CD8-positive, alpha-beta memory T cell (primary cell): ENCODE measurements at regions of chr2 and their contacts with region 1.

Region 1: GRCh38 chr2:68751397-68752339 is 17.1 kb downstream of the ARHGAP25 start:
- DNase-seq: peak; percentile 82 to 93 (median 89)
- H3K4me3 ChIP-seq: peak overlapping the region; percentile 11
- H3K4me3 Mint-ChIP-seq: peak overlapping the region; percentile 5 to 67 (median 50)
- H3K27ac ChIP-seq: no peak overlapping the region
- H3K27ac Mint-ChIP-seq: peak overlapping the region; percentile 66 to 97 (median 92)
- H3K4me1 ChIP-seq: peaks cover 91% of the 10 kb centered on the region
- H3K4me1 Mint-ChIP-seq: peaks cover 85 to 95% (median 94%) of the 10 kb centered on the region in 3 donors
- H3K27me3 ChIP-seq: no peaks in the 10 kb centered on the region
- H3K27me3 Mint-ChIP-seq: no peaks in the 10 kb centered on the region

Region 2: DNA sequence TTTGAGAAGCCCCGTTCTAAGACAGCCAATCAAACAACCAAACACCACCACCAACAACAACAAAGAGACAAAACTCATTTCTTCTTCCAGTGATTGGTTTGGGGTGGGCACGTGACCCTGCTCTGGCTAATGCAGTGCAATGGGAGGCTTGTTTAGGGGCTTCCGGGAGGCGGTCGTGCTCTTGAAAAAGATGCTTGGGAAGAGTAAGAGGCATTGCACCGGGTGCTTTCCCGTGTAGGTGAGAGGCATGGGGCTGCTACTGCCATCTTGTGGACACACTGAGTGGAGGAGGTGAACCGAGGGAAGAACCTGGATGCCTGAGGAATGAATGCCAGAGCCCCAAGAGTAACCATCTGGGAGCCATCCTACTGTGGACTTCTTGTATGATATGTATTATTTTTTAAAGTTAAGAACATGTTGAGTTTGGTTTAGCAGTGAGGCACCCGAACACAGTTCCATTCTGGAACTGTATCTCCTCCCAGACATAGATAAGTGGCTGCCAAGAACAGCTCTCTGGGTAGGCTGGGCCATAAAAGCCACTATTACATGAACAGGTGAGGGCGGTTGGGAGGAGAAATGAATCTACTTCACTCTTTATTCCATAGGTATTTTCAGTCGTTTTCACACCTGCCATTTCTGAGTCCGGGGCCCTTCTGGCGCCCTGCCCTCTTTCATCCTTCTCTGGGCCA is 36.2 kb before region 1 on chr2:
- CTCF ChIA-PET with region 1: interaction called, 26 read pairs
- POLR2A ChIA-PET with region 1: interaction called, 3 read pairs
- DNase-seq: peak in 4 of 5 donors; percentile 38 to 67 (median 49)
- H3K4me3 ChIP-seq: peak overlapping the region; percentile 38
- H3K4me3 Mint-ChIP-seq: peak overlapping the region in 6 of 7 donors; percentile 8 to 75 (median 30)
- H3K27ac ChIP-seq: no peak overlapping the region
- H3K27ac Mint-ChIP-seq: peak overlapping the region in 7 of 8 donors; percentile 56 to 90 (median 79)
- H3K4me1 ChIP-seq: peaks cover 63% of the 10 kb centered on the region
- H3K4me1 Mint-ChIP-seq: peaks cover 63% of the 10 kb centered on the region in 3 donors
- H3K27me3 ChIP-seq: no peaks in the 10 kb centered on the region
- H3K27me3 Mint-ChIP-seq: peaks cover 0 to 3% of the 10 kb centered on the region in 2 donors

Region 3: GRCh38 chr2:68734688-68735525 is 16.8 kb before region 1 on chr2 and contains the start of gene ARHGAP25:
- CTCF ChIA-PET with region 1: interaction called, 94 read pairs
- POLR2A ChIA-PET with region 1: interaction called, 14 read pairs
- DNase-seq: peak in 3 of 5 donors; percentile 58 to 67 (median 60)
- H3K4me3 ChIP-seq: peak within 1 kb of the TSS; percentile 73
- H3K4me3 Mint-ChIP-seq: no peak within 1 kb of the TSS
- H3K27ac ChIP-seq: peak within 1 kb of the TSS; percentile 62
- H3K27ac Mint-ChIP-seq: no peak within 1 kb of the TSS
- H3K4me1 ChIP-seq: peaks cover 44% of the 10 kb centered on the region
- H3K4me1 Mint-ChIP-seq: peaks cover 30 to 46% (median 42%) of the 10 kb centered on the region in 3 donors
- H3K27me3 ChIP-seq: no peaks in the 10 kb centered on the region
- H3K27me3 Mint-ChIP-seq: no peaks in the 10 kb centered on the region
- total RNA-seq, gene ARHGAP25: 74.7 to 75.2 TPM

Region 4: DNA sequence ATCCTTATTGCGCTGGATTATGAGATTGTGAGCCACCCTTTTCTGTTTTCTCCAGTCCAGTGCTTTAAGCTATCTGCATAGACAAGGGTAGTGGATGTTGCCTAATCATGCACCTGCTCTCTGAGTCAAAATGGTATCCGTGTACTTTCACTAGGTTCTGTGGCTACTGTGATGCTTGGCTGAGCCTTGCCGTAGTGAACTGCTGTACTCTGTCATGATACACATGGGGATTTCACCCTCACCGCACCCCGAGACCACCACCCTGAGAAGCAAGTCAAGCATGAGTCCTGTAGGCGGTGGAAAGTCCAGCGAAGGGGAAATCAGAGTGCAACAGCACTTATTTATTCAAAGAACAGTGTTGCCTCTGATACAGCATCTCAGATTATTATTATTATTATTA is 37.9 kb after region 1 on chr2:
- CTCF ChIA-PET with region 1: interaction called, 43 read pairs
- POLR2A ChIA-PET with region 1: interaction called, 9 read pairs
- DNase-seq: no peak
- H3K4me3 ChIP-seq: no peak overlapping the region
- H3K4me3 Mint-ChIP-seq: peak overlapping the region in 4 of 7 donors; percentile 13 to 33 (median 18)
- H3K27ac ChIP-seq: no peak overlapping the region
- H3K27ac Mint-ChIP-seq: peak overlapping the region in 7 of 8 donors; percentile 77 to 91 (median 84)
- H3K4me1 ChIP-seq: peaks cover 70% of the 10 kb centered on the region
- H3K4me1 Mint-ChIP-seq: peaks cover 52 to 53% (median 52%) of the 10 kb centered on the region in 3 donors
- H3K27me3 ChIP-seq: no peaks in the 10 kb centered on the region
- H3K27me3 Mint-ChIP-seq: no peaks in the 10 kb centered on the region

Region 5: DNA sequence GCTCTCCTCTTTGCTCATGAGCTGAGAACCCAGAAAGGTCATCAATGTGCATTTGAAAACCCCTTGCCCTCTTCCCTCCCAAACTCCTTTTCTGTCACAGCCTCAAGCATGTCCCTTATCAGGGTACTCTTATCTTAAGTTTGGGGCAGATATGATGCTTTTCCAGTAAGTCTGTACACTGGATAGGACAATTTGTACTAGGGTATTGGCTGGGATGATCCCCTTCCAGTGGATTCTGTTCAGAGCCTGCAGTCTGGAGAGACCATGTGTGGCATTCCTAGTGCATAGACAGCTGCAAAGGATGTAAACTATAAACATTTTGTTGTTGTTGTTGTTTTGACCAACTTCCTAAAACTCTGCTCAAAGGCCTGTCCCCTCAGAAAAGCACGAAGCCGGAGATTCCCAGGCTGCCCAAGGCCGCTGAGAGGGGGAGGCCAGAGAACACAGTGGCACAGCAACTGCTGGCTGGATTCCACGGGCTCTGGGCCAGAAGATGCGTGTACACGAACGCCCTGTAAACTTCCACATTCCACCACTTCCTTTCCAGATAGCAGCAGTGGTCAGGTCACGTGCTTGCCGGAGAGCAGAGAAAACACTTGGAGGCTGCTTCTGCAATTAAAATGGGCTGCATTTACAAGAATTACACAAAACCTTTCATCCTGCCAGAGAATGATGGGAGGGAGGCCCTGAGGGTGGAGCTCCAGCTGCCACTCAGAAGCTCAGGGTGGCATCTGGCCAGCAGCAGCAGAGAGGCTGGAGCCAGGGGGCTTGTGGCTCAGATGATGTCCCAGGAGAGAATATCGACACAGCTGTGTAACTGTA is 77.4 kb after region 1 on chr2:
- CTCF ChIA-PET with region 1: interaction called, 17 read pairs
- POLR2A ChIA-PET with region 1: no interaction called
- DNase-seq: peak; percentile 56 to 85 (median 70)
- H3K4me3 ChIP-seq: peak overlapping the region; percentile 18
- H3K4me3 Mint-ChIP-seq: peak overlapping the region; percentile 4 to 78 (median 71)
- H3K27ac ChIP-seq: peak overlapping the region; percentile 35
- H3K27ac Mint-ChIP-seq: peak overlapping the region; percentile 68 to 97 (median 84)
- H3K4me1 ChIP-seq: peaks cover 52% of the 10 kb centered on the region
- H3K4me1 Mint-ChIP-seq: peaks cover 59 to 86% (median 83%) of the 10 kb centered on the region in 3 donors
- H3K27me3 ChIP-seq: no peaks in the 10 kb centered on the region
- H3K27me3 Mint-ChIP-seq: peaks cover 0 to 2% of the 10 kb centered on the region in 2 donors

Region 6: DNA sequence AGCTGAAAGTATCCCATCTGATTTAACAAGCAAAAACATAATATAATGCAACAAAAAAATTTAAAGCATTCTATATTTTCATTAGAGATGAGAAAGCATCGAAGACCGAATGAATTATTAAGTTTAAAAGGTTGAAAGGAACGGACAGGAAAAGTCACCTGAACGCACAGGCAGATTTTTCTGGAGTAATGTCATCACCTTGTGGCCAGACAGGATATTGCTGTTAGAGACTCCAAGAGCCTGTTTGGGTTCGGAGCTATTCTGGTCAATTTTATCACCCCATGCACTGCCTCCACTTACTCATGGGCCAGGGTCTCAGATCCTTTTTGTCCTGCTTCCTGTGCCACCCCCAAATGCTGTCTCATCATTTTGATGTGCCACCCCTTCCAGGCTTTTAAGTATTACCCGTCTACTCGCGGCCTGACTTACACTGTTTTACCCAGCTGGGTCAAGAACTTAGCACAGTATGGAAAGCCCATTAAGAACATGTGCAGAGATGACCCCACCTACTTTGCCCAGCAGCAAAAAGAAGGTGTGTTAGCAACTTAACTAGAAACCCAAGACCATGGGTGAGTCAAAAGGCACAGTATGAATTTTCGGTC is 173.7 kb after region 1 on chr2:
- CTCF ChIA-PET with region 1: interaction called, 41 read pairs
- POLR2A ChIA-PET with region 1: no interaction called
- DNase-seq: peak; percentile 24 to 62 (median 52)
- H3K4me3 ChIP-seq: no peak overlapping the region
- H3K4me3 Mint-ChIP-seq: no peak overlapping the region
- H3K27ac ChIP-seq: no peak overlapping the region
- H3K27ac Mint-ChIP-seq: no peak overlapping the region
- H3K4me1 ChIP-seq: no peaks in the 10 kb centered on the region
- H3K4me1 Mint-ChIP-seq: peaks cover 3 to 7% (median 6%) of the 10 kb centered on the region in 3 donors
- H3K27me3 ChIP-seq: no peaks in the 10 kb centered on the region
- H3K27me3 Mint-ChIP-seq: peaks cover 9 to 19% of the 10 kb centered on the region in 2 donors